ENCODE measurements at regions of chr14 and their contacts with region 1.

Region 1: GRCh38 chr14:71309753-71310152 is 402.5 kb downstream of the PCNX1 start:
- DNase-seq: no peak
- H3K4me3 ChIP-seq: no peak overlapping the region
- H3K27ac ChIP-seq: no peak overlapping the region
- H3K4me1 ChIP-seq: no peaks in the 10 kb centered on the region
- H3K27me3 ChIP-seq: no peaks in the 10 kb centered on the region; a peak in 1 of 7 replicates
- CTCF ChIP-seq: peak in 2 of 3 experiments; percentile 44 to 55; a peak in 3 of 4 replicates
- EP300 ChIP-seq: no peak
- POLR2A ChIP-seq: no peak
- RAD21 ChIP-seq: peak; percentile 53 to 70; a peak in 3 of 4 replicates

Region 2: DNA sequence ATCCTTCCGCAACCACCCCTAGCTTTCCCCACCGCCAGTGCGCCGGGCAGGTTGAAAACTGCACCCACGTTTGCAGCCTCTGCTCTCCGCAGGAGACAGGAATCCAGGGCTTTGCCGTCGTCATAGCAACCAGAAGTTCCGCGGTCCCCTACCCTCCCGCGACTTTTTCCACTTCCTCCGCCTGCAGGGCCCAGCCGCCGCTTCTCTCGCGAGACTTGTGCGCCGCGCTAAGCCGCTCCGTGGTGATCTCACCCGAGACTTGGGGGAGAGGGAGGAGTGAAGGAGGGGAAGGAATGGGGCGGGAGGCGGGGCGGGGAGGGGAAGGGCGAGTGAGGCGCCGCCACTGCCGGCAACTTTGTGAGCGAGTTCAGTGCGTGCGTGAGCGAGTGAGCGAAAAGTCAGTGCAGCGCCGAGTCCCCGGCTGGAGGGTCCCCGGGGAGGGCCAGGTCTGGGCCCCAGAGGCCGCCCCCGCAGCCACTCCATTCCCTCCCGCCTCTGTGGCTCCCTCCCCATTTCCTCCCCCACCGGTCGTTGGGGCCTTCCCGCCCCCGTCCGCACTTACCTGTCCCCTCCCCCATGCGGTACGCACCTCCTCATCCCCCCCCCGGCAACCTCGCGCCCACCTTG is 10.5 kb after region 1 on chr14:
- CTCF ChIA-PET with region 1: interaction called, 8 read pairs
- POLR2A ChIA-PET with region 1: interaction called, 19 read pairs
- DNase-seq: peak; percentile 95 to 97
- H3K4me3 ChIP-seq: peak within 1 kb of the TSS; percentile 54 to 89 (median 86)
- H3K27ac ChIP-seq: peak within 1 kb of the TSS; percentile 79
- H3K4me1 ChIP-seq: peaks cover 0 to 9% (median 4%) of the 10 kb centered on the region in 4 experiments; a peak in 4 of 7 replicates
- H3K27me3 ChIP-seq: no peaks in the 10 kb centered on the region
- CTCF ChIP-seq: no peak
- EP300 ChIP-seq: no peak
- POLR2A ChIP-seq: peak; percentile 93 to 94
- RAD21 ChIP-seq: peak in 1 of 2 experiments; percentile 14; a peak in 1 of 4 replicates

Measured in H1 (cell line).